K562 (cell line): ENCODE measurements at regions of chr1 and their contacts with region 1.

Region 1: DNA sequence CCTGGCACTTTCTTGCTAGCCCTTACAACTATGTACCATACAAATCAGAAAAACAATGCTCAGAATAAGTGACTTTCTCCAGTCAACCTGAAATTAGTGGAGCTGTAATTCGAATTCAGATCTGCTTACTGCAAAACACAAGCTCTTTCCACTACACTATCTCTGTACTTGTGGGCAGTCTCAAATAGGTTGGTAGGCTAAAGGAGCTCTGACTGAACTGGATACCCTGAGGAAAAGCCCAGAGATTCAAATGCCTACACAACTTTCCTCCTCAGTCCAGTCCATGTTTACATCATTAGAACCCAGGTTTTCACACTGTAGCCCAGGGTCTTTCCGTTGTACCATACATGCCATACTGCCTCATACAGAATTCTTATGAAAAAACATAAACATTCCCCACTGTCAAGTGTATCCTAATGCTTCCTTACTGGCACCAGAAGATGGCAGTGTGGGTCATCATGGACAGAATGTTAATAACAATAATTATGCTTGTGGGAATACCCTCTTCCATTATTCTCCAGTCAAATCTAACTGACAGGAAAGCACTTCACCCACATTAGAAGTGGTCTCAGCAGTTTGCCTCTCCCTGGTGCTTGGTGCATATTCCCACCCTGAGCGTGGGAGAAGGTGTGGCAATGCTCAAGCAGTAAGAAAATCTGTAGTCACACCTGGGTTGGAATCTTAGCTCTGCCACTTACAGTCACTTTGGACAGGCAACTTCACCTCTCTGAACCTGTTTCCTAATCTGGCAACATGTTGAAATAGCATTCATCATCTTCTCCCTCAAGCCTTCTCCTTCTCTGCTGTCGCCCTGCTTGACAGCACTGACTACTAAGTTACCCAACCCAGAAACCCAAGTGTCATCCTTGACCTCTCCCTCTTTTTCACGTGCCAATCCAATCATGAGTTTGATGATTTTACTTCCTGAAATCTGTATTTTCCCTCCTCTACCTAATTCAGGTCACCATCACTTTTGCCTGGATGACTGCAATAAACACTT is 14.4 kb upstream of the ZFYVE9 start:
- DNase-seq: peak in 2 of 4 experiments; percentile 47 to 67
- ATAC-seq: peak; percentile 93
- H3K4me3 ChIP-seq: no peak overlapping the region
- H3K27ac ChIP-seq: no peak overlapping the region
- H3K4me1 ChIP-seq: no peaks in the 10 kb centered on the region
- H3K27me3 ChIP-seq: peaks cover 0 to 3% of the 10 kb centered on the region in 2 experiments; a peak in 4 of 5 replicates
- CTCF ChIP-seq: peak; percentile 58 to 87 (median 75); a peak in 5 of 6 replicates
- EP300 ChIP-seq: no peak
- POLR2A ChIP-seq: no peak
- RAD21 ChIP-seq: peak; percentile 81 to 92

Region 2: DNA sequence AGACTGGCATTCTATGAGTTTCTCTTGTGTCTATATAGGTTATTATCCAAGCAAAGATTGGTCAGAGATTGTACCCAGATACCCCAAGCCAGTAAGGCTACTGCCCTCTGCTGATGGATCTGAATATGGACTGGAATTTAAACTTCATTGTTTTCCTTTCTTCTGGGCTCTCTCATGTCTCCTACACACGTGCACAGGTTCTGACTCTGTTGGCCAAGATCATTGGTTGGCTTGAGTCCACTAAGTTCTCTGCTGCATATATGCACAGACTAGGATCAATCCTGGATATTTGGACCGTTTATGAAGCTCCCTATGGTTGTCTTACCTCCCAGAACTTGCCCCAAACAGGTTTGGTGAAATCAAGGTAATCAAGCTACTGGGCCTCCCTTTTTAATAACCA is 168.9 kb after region 1 on chr1:
- CTCF ChIA-PET with region 1: interaction called, 17 read pairs
- POLR2A ChIA-PET with region 1: no interaction called
- in situ Hi-C with region 1: loop called (anchors 5 kb)
- intact Hi-C with region 1: loop called (anchors 1 kb)
- DNase-seq: peak; percentile 48 to 73 (median 59)
- ATAC-seq: peak; percentile 96
- H3K4me3 ChIP-seq: no peak overlapping the region
- H3K27ac ChIP-seq: no peak overlapping the region
- H3K4me1 ChIP-seq: no peaks in the 10 kb centered on the region
- H3K27me3 ChIP-seq: no peaks in the 10 kb centered on the region
- CTCF ChIP-seq: peak; percentile 79 to 96 (median 80)
- EP300 ChIP-seq: no peak
- POLR2A ChIP-seq: no peak
- RAD21 ChIP-seq: peak; percentile 95 to 98